Left lung (tissue), 14 donors: ENCODE measurements at regions of chr1 and their contacts with region 1.

Region 1: DNA sequence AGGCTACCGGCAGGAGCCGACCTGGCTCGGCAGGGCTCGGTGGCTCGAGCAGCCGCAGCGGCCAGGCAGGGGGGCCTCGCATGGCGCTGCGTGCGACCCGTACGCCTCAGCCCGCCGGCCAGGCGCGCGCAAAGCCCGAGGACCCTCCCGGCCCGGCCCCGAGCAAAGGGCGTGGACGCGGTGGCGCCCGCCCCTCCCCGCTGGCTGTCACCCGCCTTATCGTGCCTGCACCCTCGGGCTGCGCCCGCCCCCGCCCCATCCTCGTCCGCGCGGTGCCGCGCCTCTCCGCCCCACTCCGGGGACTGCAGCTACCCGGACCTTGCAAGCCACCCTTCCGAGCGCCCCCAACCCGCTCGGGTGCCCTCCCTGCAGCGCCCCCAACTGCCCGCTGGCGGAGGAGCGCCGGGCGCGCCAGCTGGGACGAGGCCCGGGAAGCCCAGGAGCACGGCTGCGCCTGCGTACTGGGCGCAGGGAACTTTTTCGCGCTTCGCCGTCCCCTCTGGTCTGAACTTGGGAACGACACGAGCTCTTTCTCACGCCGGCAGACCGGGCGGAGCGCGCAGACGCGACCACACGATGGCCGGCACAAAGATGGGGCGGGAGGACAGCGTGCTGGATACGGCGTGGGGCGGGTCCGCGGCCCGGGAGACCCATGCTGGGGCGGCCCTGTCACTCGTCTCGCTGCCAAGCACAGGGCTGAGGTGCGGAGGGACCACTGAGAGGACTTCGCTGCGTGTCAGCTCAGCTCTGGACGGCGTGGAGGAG is at the start of gene ABCB10:
- DNase-seq: peak; percentile 97 to 99 (median 97)
- ATAC-seq: peak; percentile 92
- H3K4me3 ChIP-seq: peak within 1 kb of the TSS; percentile 65 to 76
- H3K27ac ChIP-seq: peak within 1 kb of the TSS; percentile 83 to 85
- H3K4me1 ChIP-seq: peaks cover 7 to 47% of the 10 kb centered on the region in 2 donors
- H3K27me3 ChIP-seq: no peaks in the 10 kb centered on the region
- CTCF ChIP-seq: peak; percentile 70 to 79
- polyA plus RNA-seq, gene ABCB10: 17.8 to 23.2 (median 20.1) TPM

Region 2: DNA sequence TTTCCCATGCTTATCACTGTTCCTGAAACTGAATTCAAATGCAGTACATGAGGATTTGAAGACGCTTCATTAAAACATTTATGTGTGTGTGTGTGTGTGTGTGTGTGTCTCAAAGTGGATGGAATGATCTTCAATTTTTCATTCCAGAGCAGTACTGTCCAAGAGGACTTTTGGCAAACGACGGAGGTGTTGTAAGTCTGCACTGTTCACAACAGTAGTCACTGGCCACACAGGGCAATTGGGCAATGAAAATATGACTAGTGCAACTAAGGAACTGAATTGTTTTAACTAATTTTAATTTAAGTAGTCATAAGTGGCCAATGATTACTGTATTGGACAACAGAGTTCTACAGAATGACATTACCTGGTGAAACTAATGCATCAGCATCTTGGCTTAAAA is 62.1 kb after region 1 on chr1:
- intact Hi-C with region 1: loop called in 1 of 2 experiments (anchors 5 kb)
- DNase-seq: no peak
- ATAC-seq: no peak
- H3K4me3 ChIP-seq: no peak overlapping the region
- H3K27ac ChIP-seq: no peak overlapping the region
- H3K4me1 ChIP-seq: peaks cover 3 to 40% of the 10 kb centered on the region in 2 donors
- H3K27me3 ChIP-seq: no peaks in the 10 kb centered on the region
- CTCF ChIP-seq: no peak

Region 3: GRCh38 chr1:229726061-229726460 is 167.3 kb after region 1 on chr1:
- intact Hi-C with region 1: no loop called
- DNase-seq: no peak
- ATAC-seq: peak; percentile 19
- H3K4me3 ChIP-seq: no peak overlapping the region
- H3K27ac ChIP-seq: no peak overlapping the region
- H3K4me1 ChIP-seq: no peaks in the 10 kb centered on the region
- H3K27me3 ChIP-seq: no peaks in the 10 kb centered on the region
- CTCF ChIP-seq: no peak